MCF 10A (cell line): ENCODE measurements at regions of chr18 and their contacts with region 1.

Region 1: DNA sequence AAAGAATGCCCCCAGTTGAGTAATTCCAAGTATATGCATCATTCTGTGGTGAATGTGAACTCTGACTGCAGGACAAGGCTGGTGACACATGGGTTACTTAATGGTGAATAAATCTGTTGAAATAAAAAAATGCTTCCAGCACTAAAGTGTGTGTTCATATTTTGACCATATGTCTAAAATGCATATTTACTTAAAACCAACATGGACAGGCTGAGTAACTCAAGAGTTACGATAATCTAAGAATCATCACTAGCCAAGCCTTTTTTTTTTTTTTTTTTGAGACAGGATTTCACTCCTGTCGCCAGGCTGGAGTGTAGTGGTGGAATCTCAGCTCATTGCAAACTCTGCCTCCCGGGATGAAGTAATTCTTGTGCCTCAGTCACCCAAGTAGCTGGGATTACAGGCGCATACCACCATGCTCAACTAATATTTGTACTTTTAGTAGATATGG is 47.1 kb upstream of the CCBE1 start:
- DNase-seq: peak; percentile 86
- H3K4me3 Mint-ChIP-seq: no peak overlapping the region
- H3K27ac Mint-ChIP-seq: peak overlapping the region; percentile 74
- H3K4me1 Mint-ChIP-seq: peaks cover 24% of the 10 kb centered on the region
- H3K27me3 Mint-ChIP-seq: no peaks in the 10 kb centered on the region
- CTCF ChIP-seq: no peak

Region 2: DNA sequence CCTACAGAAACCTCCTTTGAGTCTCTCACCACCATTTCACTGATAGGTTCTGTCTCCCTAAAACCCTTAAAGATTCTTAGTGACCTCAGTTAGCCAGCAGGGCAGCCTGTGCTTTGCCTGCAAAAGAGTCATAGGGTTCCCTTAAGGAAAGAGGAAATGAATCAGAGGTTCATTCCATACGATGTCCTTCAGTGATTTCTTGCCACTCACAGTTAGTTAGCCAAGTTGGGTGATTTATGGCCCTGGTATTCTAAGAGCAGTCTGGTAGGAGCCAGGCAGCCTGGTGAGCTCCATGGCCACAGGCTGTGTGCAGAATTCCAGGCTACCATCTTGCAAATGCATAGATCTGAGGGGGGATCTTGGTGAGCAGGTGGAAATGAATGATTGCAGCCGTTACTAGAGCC is 28.3 kb before region 1 on chr18:
- CTCF ChIA-PET with region 1: interaction called, 3 read pairs
- POLR2A ChIA-PET with region 1: interaction called, 4 read pairs
- intact Hi-C with region 1: loop called (anchors 2 kb)
- DNase-seq: peak; percentile 89
- H3K4me3 Mint-ChIP-seq: peak overlapping the region; percentile 18
- H3K27ac Mint-ChIP-seq: peak overlapping the region; percentile 47
- H3K4me1 Mint-ChIP-seq: peaks cover 35% of the 10 kb centered on the region
- H3K27me3 Mint-ChIP-seq: no peaks in the 10 kb centered on the region
- CTCF ChIP-seq: no peak

Region 3: GRCh38 chr18:59725142-59725541 is 19.2 kb before region 1 on chr18:
- CTCF ChIA-PET with region 1: interaction called, 10 read pairs
- POLR2A ChIA-PET with region 1: interaction called, 4 read pairs
- intact Hi-C with region 1: no loop called
- DNase-seq: no peak
- H3K4me3 Mint-ChIP-seq: no peak overlapping the region
- H3K27ac Mint-ChIP-seq: no peak overlapping the region
- H3K4me1 Mint-ChIP-seq: peaks cover 16% of the 10 kb centered on the region
- H3K27me3 Mint-ChIP-seq: no peaks in the 10 kb centered on the region
- CTCF ChIP-seq: no peak